ENCODE measurements at regions of chr7 and their contacts with region 1.

Region 1: GRCh38 chr7:100132697-100133151 is 6.0 kb downstream of the MBLAC1 start:
- DNase-seq: peak; percentile 82
- ATAC-seq: peak; percentile 81
- H3K4me3 Mint-ChIP-seq: no peak overlapping the region
- H3K27ac Mint-ChIP-seq: no peak overlapping the region
- H3K4me1 Mint-ChIP-seq: peaks cover 10% of the 10 kb centered on the region
- H3K27me3 Mint-ChIP-seq: no peaks in the 10 kb centered on the region

Region 2: GRCh38 chr7:99910976-99911375 is 221.7 kb before region 1 on chr7:
- CTCF ChIA-PET with region 1: interaction called, 11 read pairs
- POLR2A ChIA-PET with region 1: no interaction called
- intact Hi-C with region 1: loop called (anchors 2 to 5 kb)
- DNase-seq: no peak
- ATAC-seq: no peak
- H3K4me3 Mint-ChIP-seq: no peak overlapping the region
- H3K27ac Mint-ChIP-seq: peak overlapping the region; percentile 43
- H3K4me1 Mint-ChIP-seq: peaks cover 30% of the 10 kb centered on the region
- H3K27me3 Mint-ChIP-seq: no peaks in the 10 kb centered on the region

Region 3: GRCh38 chr7:100101016-100101862 is 31.5 kb before region 1 on chr7 and contains the starts of genes AP4M1 and MCM7:
- CTCF ChIA-PET with region 1: interaction called, 14 read pairs
- POLR2A ChIA-PET with region 1: no interaction called
- intact Hi-C with region 1: loop called (anchors 1 to 2 kb)
- DNase-seq: peak; percentile 99
- ATAC-seq: peak; percentile 91
- H3K4me3 Mint-ChIP-seq: peak within 1 kb of the TSS; percentile 90
- H3K27ac Mint-ChIP-seq: peak within 1 kb of the TSS; percentile 94
- H3K4me1 Mint-ChIP-seq: peaks cover 41% of the 10 kb centered on the region
- H3K27me3 Mint-ChIP-seq: no peaks in the 10 kb centered on the region
- total RNA-seq, gene AP4M1: 8.8 to 10.4 TPM
- total RNA-seq, gene MCM7: 411 to 429 TPM

Region 4: GRCh38 chr7:100148559-100149350 is 16.0 kb after region 1 on chr7 and contains the start of gene LAMTOR4:
- CTCF ChIA-PET with region 1: interaction called, 41 read pairs
- POLR2A ChIA-PET with region 1: interaction called, 4 read pairs
- intact Hi-C with region 1: loop called in 1 of 2 experiments (anchors 1 kb)
- DNase-seq: peak; percentile 99
- ATAC-seq: peak; percentile 98
- H3K4me3 Mint-ChIP-seq: peak within 1 kb of the TSS; percentile 94
- H3K27ac Mint-ChIP-seq: peak within 1 kb of the TSS; percentile 97
- H3K4me1 Mint-ChIP-seq: peaks cover 29% of the 10 kb centered on the region
- H3K27me3 Mint-ChIP-seq: no peaks in the 10 kb centered on the region
- total RNA-seq, gene LAMTOR4: 69.6 to 120 TPM

Region 5: DNA sequence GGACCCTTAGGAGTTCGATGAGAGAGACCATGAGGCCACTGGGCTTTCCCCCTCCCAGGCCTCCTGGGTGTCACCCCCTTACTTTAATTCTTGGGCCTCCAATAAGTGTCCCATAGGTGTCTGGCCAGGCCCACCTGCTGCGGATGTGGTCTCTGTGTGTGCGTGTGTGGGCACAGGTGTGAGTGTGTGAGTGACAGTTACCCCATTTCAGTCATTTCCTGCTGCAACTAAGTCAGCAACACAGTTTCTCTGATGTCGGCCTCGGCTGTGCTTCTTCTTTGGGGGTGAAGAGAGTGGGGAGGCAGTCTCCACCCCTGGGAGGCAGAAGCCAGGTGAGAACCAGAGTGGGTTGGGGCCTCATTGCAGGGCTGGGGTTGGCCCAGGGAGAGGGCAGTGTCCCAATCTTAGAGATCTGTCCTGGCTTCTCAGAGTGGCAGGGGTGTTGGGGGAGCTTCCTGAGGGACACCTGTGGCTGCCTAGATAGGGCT is 88.6 kb after region 1 on chr7:
- CTCF ChIA-PET with region 1: interaction called, 20 read pairs
- POLR2A ChIA-PET with region 1: interaction called, 3 read pairs
- intact Hi-C with region 1: loop called (anchors 1 to 5 kb)
- DNase-seq: peak; percentile 81
- ATAC-seq: peak; percentile 57
- H3K4me3 Mint-ChIP-seq: peak overlapping the region; percentile 96
- H3K27ac Mint-ChIP-seq: peak overlapping the region; percentile 90
- H3K4me1 Mint-ChIP-seq: peaks cover 47% of the 10 kb centered on the region
- H3K27me3 Mint-ChIP-seq: no peaks in the 10 kb centered on the region

Region 6: GRCh38 chr7:100446040-100446439 is 313.3 kb after region 1 on chr7:
- CTCF ChIA-PET with region 1: interaction called, 3 read pairs
- POLR2A ChIA-PET with region 1: no interaction called
- intact Hi-C with region 1: loop called in 1 of 2 experiments (anchors 1 kb)
- DNase-seq: no peak
- ATAC-seq: no peak
- H3K4me3 Mint-ChIP-seq: no peak overlapping the region
- H3K27ac Mint-ChIP-seq: no peak overlapping the region
- H3K4me1 Mint-ChIP-seq: peaks cover 15% of the 10 kb centered on the region
- H3K27me3 Mint-ChIP-seq: no peaks in the 10 kb centered on the region